ENCODE measurements at regions of chr21 and their contacts with region 1.

Region 1: DNA sequence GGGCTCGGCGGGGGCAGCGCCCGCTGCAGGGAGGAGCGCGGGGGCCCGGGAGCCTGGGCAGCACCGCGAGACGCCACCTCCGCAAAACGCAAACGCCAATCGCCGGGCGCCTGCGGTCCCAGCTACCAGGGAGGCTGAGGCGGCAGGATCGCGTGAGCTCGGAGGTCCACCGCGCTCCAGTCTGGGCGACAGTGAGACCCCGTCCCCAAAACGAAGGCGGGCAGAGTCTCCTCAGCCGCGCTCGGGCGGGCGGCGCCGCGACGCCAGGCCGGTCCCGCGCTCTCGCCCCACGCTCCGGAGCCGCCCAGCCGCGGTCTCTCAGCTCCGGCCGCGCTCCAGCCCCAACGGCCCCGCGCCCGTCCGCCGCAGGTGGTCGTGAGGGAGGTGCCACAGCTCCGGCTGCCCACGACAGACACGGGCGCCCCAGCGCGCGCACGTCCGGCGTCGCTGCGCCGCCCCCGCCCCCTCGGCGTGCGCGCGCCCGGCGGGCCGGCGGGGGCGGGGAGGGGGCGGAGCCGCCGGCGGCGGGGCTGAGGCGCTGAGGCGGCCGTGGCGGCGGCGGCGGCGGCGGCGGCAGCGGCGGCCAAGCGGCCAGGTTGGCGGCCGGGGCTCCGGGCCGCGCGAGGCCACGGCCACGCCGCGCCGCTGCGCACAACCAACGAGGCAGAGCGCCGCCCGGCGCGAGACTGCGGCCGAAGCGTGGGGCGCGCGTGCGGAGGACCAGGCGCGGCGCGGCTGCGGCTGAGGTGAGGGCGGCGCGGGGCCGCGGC is at the start of gene ADARB1:
- DNase-seq: peak; percentile 28 to 90 (median 58)
- ATAC-seq: peak; percentile 31
- H3K4me3 ChIP-seq: peak within 1 kb of the TSS; percentile 62
- H3K4me3 Mint-ChIP-seq: peak within 1 kb of the TSS; percentile 100
- H3K27ac ChIP-seq: no peak within 1 kb of the TSS
- H3K27ac Mint-ChIP-seq: peak within 1 kb of the TSS; percentile 98
- H3K4me1 ChIP-seq: peaks cover 44% of the 10 kb centered on the region
- H3K4me1 Mint-ChIP-seq: peaks cover 42% of the 10 kb centered on the region
- H3K27me3 ChIP-seq: no peaks in the 10 kb centered on the region
- H3K27me3 Mint-ChIP-seq: no peaks in the 10 kb centered on the region
- CTCF ChIP-seq: no peak
- total RNA-seq, gene ADARB1: 27.5 to 28.6 TPM

Region 2: DNA sequence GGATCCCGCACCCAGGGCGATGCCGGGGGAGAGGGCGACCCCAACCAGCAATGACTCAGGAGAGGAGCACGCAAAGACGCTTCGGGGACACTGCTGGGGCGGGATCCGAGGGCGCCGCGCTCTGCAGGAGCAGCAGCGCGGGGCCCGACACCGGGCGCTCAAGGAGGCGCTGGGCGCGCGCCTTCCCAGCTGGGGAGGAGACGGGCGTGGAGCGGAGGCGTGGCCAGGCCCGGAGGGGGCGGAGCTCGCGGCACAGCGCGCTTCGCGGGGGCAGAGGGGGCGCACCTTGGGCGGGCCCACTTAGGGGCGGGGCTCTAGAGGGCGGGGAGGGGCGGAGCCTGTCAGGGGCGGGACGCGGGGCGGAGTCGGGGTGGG is 256.7 kb before region 1 on chr21:
- CTCF ChIA-PET with region 1: no interaction called
- POLR2A ChIA-PET with region 1: no interaction called
- intact Hi-C with region 1: loop called in 1 of 2 experiments (anchors 2 kb)
- DNase-seq: peak; percentile 87 to 97 (median 94)
- ATAC-seq: peak; percentile 85
- H3K4me3 ChIP-seq: peak overlapping the region; percentile 61
- H3K4me3 Mint-ChIP-seq: peak overlapping the region; percentile 82
- H3K27ac ChIP-seq: no peak overlapping the region
- H3K27ac Mint-ChIP-seq: peak overlapping the region; percentile 65
- H3K4me1 ChIP-seq: peaks cover 19% of the 10 kb centered on the region
- H3K4me1 Mint-ChIP-seq: peaks cover 13% of the 10 kb centered on the region
- H3K27me3 ChIP-seq: no peaks in the 10 kb centered on the region
- H3K27me3 Mint-ChIP-seq: no peaks in the 10 kb centered on the region
- CTCF ChIP-seq: no peak

Region 3: GRCh38 chr21:45087022-45087823 is 13.0 kb after region 1 on chr21:
- CTCF ChIA-PET with region 1: interaction called, 4 read pairs
- POLR2A ChIA-PET with region 1: interaction called, 8 read pairs
- intact Hi-C with region 1: loop called in 1 of 2 experiments (anchors 1 kb)
- DNase-seq: peak in 3 of 14 experiments; percentile 57 to 68 (median 58)
- ATAC-seq: peak; percentile 51
- H3K4me3 ChIP-seq: no peak overlapping the region
- H3K4me3 Mint-ChIP-seq: peak overlapping the region; percentile 61
- H3K27ac ChIP-seq: peak overlapping the region in 1 of 2 donors; percentile 5
- H3K27ac Mint-ChIP-seq: peak overlapping the region; percentile 94
- H3K4me1 ChIP-seq: peaks cover 70% of the 10 kb centered on the region
- H3K4me1 Mint-ChIP-seq: peaks cover 91% of the 10 kb centered on the region
- H3K27me3 ChIP-seq: no peaks in the 10 kb centered on the region
- H3K27me3 Mint-ChIP-seq: no peaks in the 10 kb centered on the region
- CTCF ChIP-seq: no peak

Region 4: GRCh38 chr21:45109831-45110492 is 35.7 kb after region 1 on chr21:
- CTCF ChIA-PET with region 1: interaction called, 3 read pairs
- POLR2A ChIA-PET with region 1: interaction called, 4 read pairs
- intact Hi-C with region 1: loop called in 1 of 2 experiments (anchors 5 kb)
- DNase-seq: peak in 7 of 14 experiments; percentile 20 to 68 (median 44)
- ATAC-seq: peak; percentile 75
- H3K4me3 ChIP-seq: peak overlapping the region; percentile 40
- H3K4me3 Mint-ChIP-seq: peak overlapping the region; percentile 76
- H3K27ac ChIP-seq: no peak overlapping the region
- H3K27ac Mint-ChIP-seq: peak overlapping the region; percentile 14
- H3K4me1 ChIP-seq: peaks cover 29% of the 10 kb centered on the region
- H3K4me1 Mint-ChIP-seq: peaks cover 76% of the 10 kb centered on the region
- H3K27me3 ChIP-seq: no peaks in the 10 kb centered on the region
- H3K27me3 Mint-ChIP-seq: no peaks in the 10 kb centered on the region
- CTCF ChIP-seq: no peak

Region 5: GRCh38 chr21:45542242-45542666 is 468.0 kb after region 1 on chr21 and contains the start of gene SLC19A1:
- CTCF ChIA-PET with region 1: no interaction called
- POLR2A ChIA-PET with region 1: no interaction called
- intact Hi-C with region 1: loop called in 1 of 2 experiments (anchors 10 kb)
- DNase-seq: peak; percentile 48 to 90 (median 68)
- ATAC-seq: peak; percentile 83
- H3K4me3 ChIP-seq: peak within 1 kb of the TSS; percentile 46
- H3K4me3 Mint-ChIP-seq: peak within 1 kb of the TSS; percentile 86
- H3K27ac ChIP-seq: peak within 1 kb of the TSS in 1 of 2 donors; percentile 55
- H3K27ac Mint-ChIP-seq: peak within 1 kb of the TSS; percentile 80
- H3K4me1 ChIP-seq: peaks cover 23% of the 10 kb centered on the region
- H3K4me1 Mint-ChIP-seq: peaks cover 24% of the 10 kb centered on the region
- H3K27me3 ChIP-seq: no peaks in the 10 kb centered on the region
- H3K27me3 Mint-ChIP-seq: no peaks in the 10 kb centered on the region
- CTCF ChIP-seq: no peak
- total RNA-seq, gene SLC19A1: 11.5 to 12.0 TPM

Measured in CD4-positive, alpha-beta T cell (primary cell).